Left cardiac atrium (tissue), 4 donors: ENCODE measurements at regions of chr4 and their contacts with region 1.

Region 1: GRCh38 chr4:89434364-89434988 is 126.9 kb upstream of the GPRIN3 start:
- DNase-seq: no peak
- ATAC-seq: peak; percentile 59 to 80

Region 2: GRCh38 chr4:88706574-88706973 is 727.9 kb before region 1 on chr4:
- intact Hi-C with region 1: no loop called
- DNase-seq: peak; percentile 32
- ATAC-seq: peak; percentile 85 to 95

Region 3: DNA sequence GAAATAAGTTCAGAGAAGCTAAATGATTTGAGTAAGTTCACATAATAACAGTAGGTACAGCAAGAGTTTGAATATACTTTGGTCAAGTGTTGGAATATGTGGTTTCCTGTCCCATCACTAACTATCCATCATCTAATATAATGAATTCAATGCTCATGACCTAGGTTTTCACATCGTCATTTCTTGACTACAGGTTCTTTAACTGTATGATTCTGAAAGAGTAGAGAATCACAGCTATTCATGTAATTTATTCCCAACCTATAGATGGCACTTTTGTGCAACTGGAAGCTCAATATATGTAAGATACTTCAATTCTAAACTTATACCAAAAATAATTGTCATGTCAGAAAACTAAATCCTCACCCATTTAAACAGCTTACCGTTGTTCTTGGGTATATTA is 270.1 kb before region 1 on chr4:
- intact Hi-C with region 1: loop called in 1 of 2 experiments (anchors 5 kb)
- DNase-seq: no peak
- ATAC-seq: no peak

Region 4: DNA sequence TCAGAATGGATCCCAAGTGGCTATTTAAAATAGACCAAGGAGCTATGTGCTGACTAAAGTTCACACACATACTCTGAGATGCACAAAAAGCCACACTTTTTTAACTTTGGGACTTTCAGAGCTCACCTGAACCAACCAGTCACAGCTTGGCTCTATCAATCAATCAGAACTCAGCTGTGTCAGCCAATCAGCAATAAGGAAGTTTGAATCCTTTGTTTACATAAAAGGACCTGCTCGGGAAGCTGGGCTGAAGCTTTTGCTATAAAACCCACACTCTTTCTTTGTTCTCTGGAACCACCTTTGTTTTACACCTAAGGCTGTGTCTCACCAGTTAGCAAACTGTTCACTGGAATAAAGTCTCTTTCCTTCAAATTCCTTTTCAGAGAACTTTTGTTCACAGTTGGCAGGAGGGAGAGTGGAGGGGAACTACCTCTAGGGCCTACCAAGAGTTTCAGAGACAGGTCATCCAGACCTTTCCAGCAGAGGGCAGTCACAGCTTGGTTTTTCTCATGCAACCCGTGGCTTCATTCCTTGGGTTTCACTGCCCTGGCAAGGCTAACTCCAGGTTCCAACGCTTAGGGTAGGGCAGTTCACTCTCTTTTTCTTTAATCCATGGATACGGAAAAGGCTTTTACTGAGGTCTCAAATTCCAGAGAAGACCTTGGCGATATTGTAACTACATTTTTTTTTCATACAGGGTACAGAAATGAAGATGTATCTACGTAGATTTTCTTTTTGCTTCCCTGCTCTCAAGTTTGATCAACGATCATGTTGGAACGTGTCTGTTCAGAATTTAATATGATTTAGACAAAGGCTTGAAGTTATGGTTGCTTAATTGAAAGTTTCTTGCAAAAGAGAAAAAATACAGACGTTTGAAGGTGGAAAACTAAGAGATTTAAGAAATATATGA is 207.6 kb before region 1 on chr4:
- intact Hi-C with region 1: loop called (anchors 1 to 5 kb)
- DNase-seq: peak; percentile 70
- ATAC-seq: peak; percentile 98 to 99

Region 5: DNA sequence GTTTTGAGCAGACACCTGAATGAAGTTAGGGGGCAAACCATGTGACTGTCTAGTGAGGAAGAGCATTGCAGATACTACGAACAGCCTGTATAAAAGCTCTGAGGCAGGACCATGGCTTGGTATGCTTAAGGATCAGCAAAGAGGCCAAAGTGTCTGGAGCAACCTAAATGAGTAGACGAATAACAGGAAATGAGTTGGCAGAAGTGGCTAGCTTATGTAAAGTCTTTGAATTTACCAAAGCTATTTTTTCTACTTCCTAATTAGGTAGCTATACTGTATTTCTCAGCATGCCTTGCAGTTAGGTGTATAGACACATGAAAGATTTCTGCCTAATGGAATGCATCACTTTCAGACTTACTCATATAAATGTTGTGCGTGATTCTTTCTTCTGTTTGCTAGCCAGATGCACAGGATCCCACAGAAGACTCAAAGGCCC is 117.5 kb before region 1 on chr4:
- intact Hi-C with region 1: loop called in 1 of 2 experiments (anchors 10 kb)
- DNase-seq: no peak
- ATAC-seq: peak; percentile 53 to 58